Mucosa of descending colon (tissue), 3 donors: ENCODE measurements at regions of chr22 and their contacts with region 1.

Region 1: DNA sequence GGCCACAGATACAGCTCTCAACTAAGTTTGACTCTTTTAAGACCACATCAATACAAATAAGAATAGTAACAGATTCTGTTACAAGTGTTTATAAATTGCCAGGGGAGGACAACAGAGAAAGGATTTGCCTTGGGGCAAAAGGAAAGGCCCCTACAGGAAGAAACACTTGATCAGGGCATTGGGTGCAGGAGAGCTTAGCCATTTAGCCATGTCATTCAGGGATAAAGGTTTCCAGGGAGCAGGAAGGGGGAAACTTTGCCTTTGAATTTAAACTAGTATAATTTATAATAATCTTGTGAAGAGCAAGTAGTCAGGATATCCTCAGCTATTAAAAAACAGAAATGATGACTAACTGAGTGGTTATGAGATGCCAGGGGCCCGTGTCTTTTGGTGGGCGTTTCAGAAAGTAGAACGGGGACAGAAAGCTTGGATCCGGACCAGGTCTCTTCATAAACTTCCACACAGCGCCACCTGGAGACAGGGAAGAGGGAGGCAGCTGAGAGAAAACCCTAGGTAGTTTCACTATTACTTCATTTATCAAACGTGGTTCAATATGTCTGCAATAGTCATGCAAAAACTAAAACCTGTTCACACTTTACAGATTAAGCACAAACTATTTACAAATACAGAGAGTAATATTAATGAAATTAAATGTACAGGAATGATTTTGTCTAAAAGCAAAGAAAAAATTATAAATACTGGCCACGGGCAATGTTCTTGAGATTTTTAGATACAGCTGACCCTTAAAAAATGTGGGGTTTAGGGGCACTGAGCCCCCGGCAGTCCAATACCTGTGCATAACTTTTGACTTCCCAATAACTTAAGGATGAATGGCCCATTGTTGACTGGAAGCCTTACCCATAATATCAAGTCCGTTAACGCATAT is 11.0 kb upstream of the SLC5A4 start:
- DNase-seq: peak in 2 of 3 donors; percentile 53 to 81
- ATAC-seq: peak; percentile 82
- H3K4me3 ChIP-seq: no peak overlapping the region
- H3K4me1 ChIP-seq: no peaks in the 10 kb centered on the region
- CTCF ChIP-seq: peak; percentile 76

Region 2: DNA sequence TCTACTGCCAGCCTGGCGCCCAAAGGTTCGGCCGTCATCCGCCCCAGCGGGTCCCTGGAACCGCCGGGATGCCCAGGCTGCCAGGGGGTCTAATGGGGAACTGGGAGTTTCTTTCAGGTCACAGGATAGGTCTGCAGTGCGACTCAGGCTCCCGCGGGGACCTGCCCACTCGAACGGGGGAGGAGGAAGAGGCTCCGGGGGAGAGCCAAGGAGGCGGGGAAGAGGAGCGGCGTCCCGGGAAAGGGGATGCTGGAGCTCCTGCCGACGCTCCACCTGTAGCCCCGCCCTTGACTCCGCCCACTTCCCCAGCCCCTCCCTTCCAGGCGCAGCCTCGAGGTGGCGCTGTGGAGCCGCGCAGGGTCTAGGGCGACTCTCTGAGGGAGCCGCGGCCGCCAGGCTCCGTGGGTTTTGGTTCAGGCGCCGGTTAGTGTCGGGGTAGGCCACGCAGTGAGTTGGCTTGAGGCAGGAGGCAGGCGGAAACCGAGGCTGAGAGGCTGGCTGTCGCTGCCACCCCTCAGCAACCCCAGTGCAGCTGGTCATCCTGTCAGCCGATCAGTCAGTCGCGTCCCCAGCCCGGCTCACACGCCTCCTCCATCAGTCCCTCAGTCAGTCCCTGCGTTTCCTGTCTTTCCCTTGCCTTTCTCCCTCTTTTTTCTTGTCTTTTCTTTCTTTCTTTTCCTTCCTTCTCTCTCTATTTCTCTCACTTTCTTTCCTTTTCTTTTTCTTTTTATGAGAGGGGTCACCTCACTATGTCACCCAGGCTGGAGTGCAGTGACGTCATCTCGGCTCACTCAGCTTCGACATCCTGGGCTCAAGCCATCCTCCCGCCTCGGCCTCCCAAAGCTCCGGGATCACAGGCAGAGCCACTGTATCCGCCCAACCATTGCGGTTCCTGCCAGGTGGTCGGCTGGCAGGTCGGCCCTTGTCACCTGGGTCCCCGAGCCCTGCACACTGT is 295.4 kb before region 1 on chr22:
- intact Hi-C with region 1: loop called in 1 of 2 experiments (anchors 10 kb)
- DNase-seq: peak; percentile 89 to 97 (median 91)
- ATAC-seq: peak; percentile 92
- H3K4me3 ChIP-seq: no peak overlapping the region
- H3K4me1 ChIP-seq: peaks cover 14% of the 10 kb centered on the region
- CTCF ChIP-seq: peak; percentile 96